Dorsolateral prefrontal cortex (tissue), 120 donors: ENCODE measurements at regions of chr1 and their contacts with region 1.

Region 1: DNA sequence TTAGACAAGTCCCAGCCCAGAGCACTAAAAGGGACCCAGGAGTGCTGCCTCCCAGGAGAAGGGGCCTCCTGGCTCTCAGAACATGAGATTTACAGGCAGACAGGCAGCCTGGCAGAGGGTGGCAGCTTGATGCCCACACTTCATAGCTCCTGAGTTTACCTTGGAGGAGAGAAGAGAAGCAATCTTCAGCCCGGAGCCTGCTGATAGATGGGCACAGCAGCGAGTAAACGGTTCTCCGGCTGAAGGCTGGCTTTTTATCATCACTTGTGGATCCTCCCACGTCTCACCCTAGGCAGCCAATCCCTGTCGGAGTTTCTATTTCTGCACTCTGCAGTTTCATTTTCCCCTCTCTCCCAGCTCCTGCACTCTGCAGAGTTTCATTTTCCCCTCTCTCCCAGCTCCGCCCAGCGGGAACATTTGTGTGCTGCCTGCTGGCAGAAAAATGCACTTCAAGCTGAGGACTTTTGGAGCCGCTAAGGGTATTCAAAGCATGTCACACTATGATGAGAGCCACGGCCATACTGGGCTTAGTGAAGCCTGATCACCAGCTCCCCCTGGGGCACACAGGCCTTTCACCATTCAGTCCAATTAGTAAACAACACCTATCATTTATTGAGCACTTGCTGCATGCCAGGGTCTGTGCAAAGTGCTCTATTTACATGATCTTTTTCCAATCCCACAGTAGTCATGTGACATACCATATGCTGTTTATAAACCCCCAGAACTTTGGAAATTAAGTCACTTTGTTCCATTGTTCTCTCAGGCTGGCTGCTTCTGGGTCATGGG is at the start of gene IFI6:
- DNase-seq: peak; percentile 53 to 96 (median 88)
- H3K4me3 ChIP-seq: peak within 1 kb of the TSS; percentile 37 to 90 (median 67)
- H3K27ac ChIP-seq: peak within 1 kb of the TSS; percentile 77 to 99 (median 92)
- H3K27me3 ChIP-seq: no peaks in the 10 kb centered on the region
- CTCF ChIP-seq: peak in 53 of 56 donors; percentile 16 to 71 (median 52)
- total RNA-seq, gene IFI6: 51.8 to 1,534 (median 96.2) TPM

Region 2: GRCh38 chr1:27496604-27497155 is 175.5 kb before region 1 on chr1:
- intact Hi-C with region 1: no loop called
- DNase-seq: peak in 1 of 10 donors; percentile 24
- H3K4me3 ChIP-seq: peak overlapping the region in 38 of 59 donors; percentile 1 to 47 (median 24)
- H3K27ac ChIP-seq: peak overlapping the region in 40 of 59 donors; percentile 2 to 81 (median 54)
- H3K27me3 ChIP-seq: no peaks in the 10 kb centered on the region
- CTCF ChIP-seq: no peak

Region 3: GRCh38 chr1:27725374-27726173 is 53.4 kb after region 1 on chr1 and contains the start of gene FAM76A:
- intact Hi-C with region 1: loop called (anchors 1 to 2 kb)
- DNase-seq: peak; percentile 99 to 100 (median 99)
- H3K4me3 ChIP-seq: peak within 1 kb of the TSS; percentile 64 to 98 (median 91)
- H3K27ac ChIP-seq: peak within 1 kb of the TSS; percentile 61 to 97 (median 93)
- H3K27me3 ChIP-seq: no peaks in the 10 kb centered on the region
- CTCF ChIP-seq: peak in 55 of 56 donors; percentile 27 to 89 (median 65)
- total RNA-seq, gene FAM76A: 8.3 to 24.0 (median 15.8) TPM

Region 4: GRCh38 chr1:27830621-27831424 is 158.7 kb after region 1 on chr1 and contains the start of gene PPP1R8:
- intact Hi-C with region 1: loop called in 1 of 2 experiments (anchors 2 kb)
- DNase-seq: peak; percentile 87 to 96 (median 94)
- H3K4me3 ChIP-seq: peak within 1 kb of the TSS; percentile 68 to 100 (median 94)
- H3K27ac ChIP-seq: peak within 1 kb of the TSS; percentile 60 to 98 (median 94)
- H3K27me3 ChIP-seq: no peaks in the 10 kb centered on the region
- CTCF ChIP-seq: peak in 43 of 56 donors; percentile 5 to 67 (median 35)
- total RNA-seq, gene PPP1R8: 26.5 to 47.0 (median 34.4) TPM